ENCODE measurements at regions of chr2 and their contacts with region 1.

Region 1: DNA sequence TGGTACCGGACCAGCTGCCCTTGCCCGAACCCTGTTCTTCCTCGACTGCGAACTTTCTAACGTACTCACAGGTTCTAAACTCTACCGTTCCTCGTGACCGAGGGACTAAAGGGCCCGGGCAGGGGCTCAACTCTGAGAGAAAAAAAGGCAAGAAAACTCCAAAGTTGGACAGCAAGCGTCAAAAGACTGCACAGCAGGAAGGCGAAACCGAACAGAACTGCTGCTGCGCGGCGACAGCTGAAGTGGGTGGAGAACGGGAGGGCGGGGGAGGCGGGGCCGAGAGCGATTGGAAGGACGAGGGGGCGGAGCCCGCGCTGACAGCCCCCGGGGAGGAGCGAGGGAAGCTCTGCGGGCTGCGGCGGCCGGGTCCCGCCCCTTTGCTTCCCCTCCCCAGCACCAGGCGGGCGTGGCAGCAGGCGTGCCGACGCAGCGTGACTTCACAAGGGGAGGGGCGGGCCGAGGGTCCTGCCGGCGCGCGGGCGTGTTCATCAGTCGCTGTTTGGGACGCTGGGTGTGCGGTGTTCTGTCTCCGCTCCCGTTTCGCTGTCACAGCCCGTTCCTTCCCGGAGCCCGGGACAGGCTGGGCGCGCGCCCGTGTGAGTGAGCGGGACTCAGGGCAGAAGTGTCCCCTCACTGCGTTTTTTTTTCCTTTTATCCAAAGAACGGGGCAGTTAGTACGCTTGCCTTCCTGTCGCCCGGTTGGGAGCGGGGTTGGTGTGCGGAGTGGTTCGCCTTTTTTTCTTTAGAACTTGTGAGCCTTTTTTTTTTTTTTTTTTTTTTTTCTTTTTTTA is at the start of gene NABP1:
- DNase-seq: peak; percentile 98
- ATAC-seq: peak; percentile 84
- H3K4me3 Mint-ChIP-seq: peak within 1 kb of the TSS; percentile 97
- H3K27ac Mint-ChIP-seq: peak within 1 kb of the TSS; percentile 99
- H3K4me1 Mint-ChIP-seq: peaks cover 64% of the 10 kb centered on the region
- H3K27me3 Mint-ChIP-seq: no peaks in the 10 kb centered on the region
- CTCF ChIP-seq: no peak
- total RNA-seq, gene NABP1: 69.6 and 86.0 TPM in 2 replicates

Region 2: GRCh38 chr2:190216829-190217228 is 1461.0 kb before region 1 on chr2:
- CTCF ChIA-PET with region 1: no interaction called
- POLR2A ChIA-PET with region 1: no interaction called
- intact Hi-C with region 1: no loop called
- DNase-seq: no peak
- ATAC-seq: no peak
- H3K4me3 Mint-ChIP-seq: no peak overlapping the region
- H3K27ac Mint-ChIP-seq: no peak overlapping the region
- H3K4me1 Mint-ChIP-seq: peaks cover 9% of the 10 kb centered on the region
- H3K27me3 Mint-ChIP-seq: no peaks in the 10 kb centered on the region
- CTCF ChIP-seq: no peak

Region 3: DNA sequence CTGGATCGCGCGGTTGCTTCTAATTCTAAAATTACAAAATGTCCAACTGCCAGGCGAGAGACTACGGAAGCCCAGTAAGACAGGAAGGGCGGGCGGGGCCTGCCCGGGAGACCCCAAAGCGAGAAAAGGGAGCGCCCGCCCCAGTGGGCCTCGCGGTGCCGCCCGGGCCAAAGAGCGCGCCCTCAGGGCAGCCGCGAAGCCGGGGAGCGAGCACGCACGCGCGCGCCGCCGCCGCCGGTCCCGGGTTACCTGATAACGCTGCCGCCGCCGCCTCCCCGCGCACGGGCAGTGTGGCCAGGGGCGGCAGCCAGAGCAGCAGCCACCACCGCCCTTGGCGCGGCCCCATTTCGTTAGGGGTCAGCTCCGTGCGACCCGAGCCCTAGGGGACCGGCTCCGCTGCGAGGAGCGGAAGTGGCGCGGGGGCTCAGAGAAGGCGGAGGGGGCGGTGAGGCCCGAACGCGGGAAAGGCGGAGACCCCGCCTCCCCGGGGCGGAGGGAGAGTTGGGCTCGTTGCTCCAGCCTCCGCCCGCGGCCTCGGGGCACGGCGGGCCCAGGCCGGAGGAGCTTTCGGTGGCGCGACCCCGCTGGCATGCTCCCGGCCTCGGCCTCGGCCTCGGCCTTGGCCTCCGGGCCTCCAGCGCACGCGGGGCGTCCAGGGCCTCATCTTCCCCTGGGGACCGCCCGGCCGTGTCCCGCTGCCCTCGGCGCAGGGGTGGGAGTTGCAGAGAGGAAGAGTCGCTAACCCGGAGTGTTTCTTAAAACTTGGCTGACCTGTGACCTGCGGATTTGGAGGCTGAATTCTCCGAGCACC is 1143.3 kb before region 1 on chr2 and contains the start of gene NEMP2:
- CTCF ChIA-PET with region 1: no interaction called
- POLR2A ChIA-PET with region 1: no interaction called
- intact Hi-C with region 1: loop called (anchors 5 kb)
- DNase-seq: peak; percentile 90
- ATAC-seq: peak; percentile 80
- H3K4me3 Mint-ChIP-seq: peak within 1 kb of the TSS; percentile 97
- H3K27ac Mint-ChIP-seq: peak within 1 kb of the TSS; percentile 100
- H3K4me1 Mint-ChIP-seq: peaks cover 56% of the 10 kb centered on the region
- H3K27me3 Mint-ChIP-seq: no peaks in the 10 kb centered on the region
- CTCF ChIP-seq: no peak
- total RNA-seq, gene NEMP2: 14.2 and 15.6 TPM in 2 replicates

Region 4: GRCh38 chr2:191020221-191020741 is 657.6 kb before region 1 on chr2:
- CTCF ChIA-PET with region 1: no interaction called
- POLR2A ChIA-PET with region 1: interaction called, 17 read pairs
- intact Hi-C with region 1: loop called (anchors 1 kb)
- DNase-seq: peak; percentile 97
- ATAC-seq: peak; percentile 83
- H3K4me3 Mint-ChIP-seq: no peak overlapping the region
- H3K27ac Mint-ChIP-seq: no peak overlapping the region
- H3K4me1 Mint-ChIP-seq: peaks cover 10% of the 10 kb centered on the region
- H3K27me3 Mint-ChIP-seq: no peaks in the 10 kb centered on the region
- CTCF ChIP-seq: no peak

Region 5: GRCh38 chr2:191144217-191144616 is 533.6 kb before region 1 on chr2:
- CTCF ChIA-PET with region 1: no interaction called
- POLR2A ChIA-PET with region 1: no interaction called
- intact Hi-C with region 1: no loop called
- DNase-seq: no peak
- ATAC-seq: no peak
- H3K4me3 Mint-ChIP-seq: no peak overlapping the region
- H3K27ac Mint-ChIP-seq: no peak overlapping the region
- H3K4me1 Mint-ChIP-seq: peaks cover 4% of the 10 kb centered on the region
- H3K27me3 Mint-ChIP-seq: peaks cover 8% of the 10 kb centered on the region
- CTCF ChIP-seq: no peak

Region 6: GRCh38 chr2:191593622-191594416 is 84.0 kb before region 1 on chr2:
- CTCF ChIA-PET with region 1: no interaction called
- POLR2A ChIA-PET with region 1: interaction called, 13 read pairs
- intact Hi-C with region 1: no loop called
- DNase-seq: no peak
- ATAC-seq: no peak
- H3K4me3 Mint-ChIP-seq: no peak overlapping the region
- H3K27ac Mint-ChIP-seq: no peak overlapping the region
- H3K4me1 Mint-ChIP-seq: no peaks in the 10 kb centered on the region
- H3K27me3 Mint-ChIP-seq: peaks cover 2% of the 10 kb centered on the region
- CTCF ChIP-seq: no peak

Region 7: DNA sequence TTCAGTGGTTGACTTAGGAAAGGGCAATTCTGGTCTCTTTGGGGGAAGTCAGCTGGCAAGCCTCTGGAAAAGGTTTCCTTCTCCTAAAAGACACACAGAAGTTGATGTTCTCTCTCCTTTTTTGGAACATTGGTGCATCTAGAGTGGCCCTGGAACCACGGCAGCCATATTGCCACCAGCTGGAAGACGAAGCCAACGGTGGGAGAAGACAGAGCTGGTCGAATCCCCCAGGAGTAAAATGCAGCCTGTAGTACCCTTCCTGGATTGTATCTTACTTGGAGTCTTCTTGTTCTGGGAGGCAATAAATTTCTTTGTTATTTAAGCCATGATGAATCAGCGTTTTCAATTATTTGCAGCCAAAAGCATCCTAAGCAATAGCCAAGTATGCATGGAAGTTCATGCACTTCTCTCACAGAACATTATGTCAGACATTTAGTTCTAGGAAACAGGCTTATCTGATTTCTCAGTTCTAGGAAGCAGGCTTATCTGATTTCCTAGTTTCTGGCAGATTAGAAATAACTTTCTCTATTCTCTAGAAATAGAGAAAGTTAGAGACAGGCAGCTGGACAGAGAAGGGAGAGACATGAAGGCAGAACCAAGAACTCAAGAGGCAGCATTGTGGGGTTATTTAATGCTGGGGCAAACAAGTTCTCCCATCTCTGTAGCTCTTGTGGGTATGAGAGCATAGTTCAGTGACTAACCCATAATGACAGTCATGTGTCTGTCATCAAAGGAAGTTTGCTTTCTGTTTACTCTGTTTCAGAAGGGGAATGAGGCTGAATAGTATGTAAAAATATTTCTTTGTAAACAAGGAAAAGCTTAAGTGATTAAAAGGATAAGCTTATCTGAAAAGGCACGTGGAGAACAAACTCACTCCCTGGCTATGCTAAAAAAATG is 40.4 kb before region 1 on chr2:
- CTCF ChIA-PET with region 1: no interaction called
- POLR2A ChIA-PET with region 1: interaction called, 27 read pairs
- intact Hi-C with region 1: loop called (anchors 5 kb)
- DNase-seq: no peak
- ATAC-seq: peak; percentile 54
- H3K4me3 Mint-ChIP-seq: no peak overlapping the region
- H3K27ac Mint-ChIP-seq: peak overlapping the region; percentile 38
- H3K4me1 Mint-ChIP-seq: peaks cover 30% of the 10 kb centered on the region
- H3K27me3 Mint-ChIP-seq: no peaks in the 10 kb centered on the region
- CTCF ChIP-seq: no peak

Region 8: GRCh38 chr2:191691016-191691735 is 13.3 kb after region 1 on chr2:
- CTCF ChIA-PET with region 1: interaction called, 4 read pairs
- POLR2A ChIA-PET with region 1: interaction called, 25 read pairs
- intact Hi-C with region 1: loop called (anchors 1 kb)
- DNase-seq: no peak
- ATAC-seq: peak; percentile 85
- H3K4me3 Mint-ChIP-seq: no peak overlapping the region
- H3K27ac Mint-ChIP-seq: peak overlapping the region; percentile 41
- H3K4me1 Mint-ChIP-seq: peaks cover 34% of the 10 kb centered on the region
- H3K27me3 Mint-ChIP-seq: no peaks in the 10 kb centered on the region
- CTCF ChIP-seq: no peak

Measured in activated B cell treated with CpG ODN at 0.5 μM for 24 hours (primary cell).